ENCODE measurements at regions of chrX and their contacts with region 1.

Region 1: GRCh38 chrX:139890991-139891700 is 41.7 kb downstream of the ATP11C start:
- DNase-seq: peak; percentile 79
- H3K4me3 ChIP-seq: no peak overlapping the region
- H3K27ac ChIP-seq: peak overlapping the region; percentile 55
- H3K4me1 ChIP-seq: peaks cover 21% of the 10 kb centered on the region
- H3K27me3 ChIP-seq: no peaks in the 10 kb centered on the region
- CTCF ChIP-seq: no peak
- POLR2A ChIP-seq: no peak

Region 2: DNA sequence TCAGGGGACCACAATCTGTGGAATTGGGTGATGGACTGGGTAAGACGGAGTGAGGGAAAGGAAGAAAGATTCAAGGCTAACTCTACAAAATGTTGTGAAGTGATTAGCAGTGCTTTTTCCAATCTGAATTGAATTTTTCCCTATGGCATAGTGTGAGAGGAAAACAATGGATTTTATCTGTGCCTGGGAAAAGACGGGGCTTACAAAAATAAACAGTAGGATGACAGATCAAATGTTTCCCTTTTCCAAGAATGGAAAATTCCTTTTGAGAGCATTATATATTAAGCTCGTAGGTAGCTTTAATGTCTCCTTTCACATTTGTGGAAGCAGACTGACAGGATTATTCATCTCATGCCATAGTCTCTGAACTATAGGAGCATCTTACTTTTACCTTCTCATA is 13.9 kb after region 1 on chrX:
- CTCF ChIA-PET with region 1: no interaction called
- POLR2A ChIA-PET with region 1: no interaction called
- dilution Hi-C with region 1: no loop called
- intact Hi-C with region 1: loop called (anchors 2 kb)
- DNase-seq: peak; percentile 78
- H3K4me3 ChIP-seq: peak overlapping the region in 1 of 3 experiments; percentile 32
- H3K27ac ChIP-seq: peak overlapping the region; percentile 55
- H3K4me1 ChIP-seq: peaks cover 16% of the 10 kb centered on the region
- H3K27me3 ChIP-seq: no peaks in the 10 kb centered on the region
- CTCF ChIP-seq: no peak
- POLR2A ChIP-seq: no peak

Measured in endothelial cell of umbilical vein (primary cell).